ENCODE measurements at regions of chr15 and their contacts with region 1.

Region 1: GRCh38 chr15:31265871-31266711 is 60.5 kb upstream of the KLF13 start:
- DNase-seq: peak; percentile 81
- H3K4me3 Mint-ChIP-seq: no peak overlapping the region
- H3K27ac Mint-ChIP-seq: peak overlapping the region; percentile 67
- H3K4me1 Mint-ChIP-seq: peaks cover 84% of the 10 kb centered on the region
- H3K27me3 Mint-ChIP-seq: no peaks in the 10 kb centered on the region

Region 2: DNA sequence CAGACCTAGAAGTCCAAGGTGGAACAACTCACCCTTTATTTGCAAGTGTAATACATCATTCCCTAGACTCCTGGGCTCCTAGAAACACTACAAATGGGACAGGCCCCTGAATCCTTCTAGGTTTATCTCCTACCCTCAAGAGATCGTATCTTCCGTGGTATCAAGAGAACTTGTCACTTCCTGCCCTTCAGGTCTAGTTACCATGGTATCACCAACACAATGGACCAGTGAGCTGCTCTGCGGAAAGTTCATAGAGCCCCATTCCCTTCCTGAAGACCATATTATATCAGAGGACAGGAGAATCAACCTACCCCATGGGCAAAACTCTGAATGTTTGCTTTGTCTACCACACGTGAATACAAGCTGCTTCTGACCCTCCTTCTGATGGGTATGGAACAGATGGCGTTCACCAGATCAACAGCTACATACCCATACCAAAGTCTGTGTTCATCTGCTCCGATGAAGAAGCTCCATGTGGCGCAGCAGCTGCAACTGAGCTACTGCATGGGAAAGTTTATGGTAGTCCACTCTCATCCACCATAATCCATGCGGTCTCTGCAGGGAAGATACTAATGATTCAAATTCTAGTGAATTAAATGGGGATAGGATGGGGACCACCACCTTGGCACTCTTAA is 24.1 kb before region 1 on chr15:
- CTCF ChIA-PET with region 1: no interaction called
- intact Hi-C with region 1: loop called (anchors 2 kb)
- DNase-seq: no peak
- H3K4me3 Mint-ChIP-seq: no peak overlapping the region
- H3K27ac Mint-ChIP-seq: no peak overlapping the region
- H3K4me1 Mint-ChIP-seq: peaks cover 28% of the 10 kb centered on the region
- H3K27me3 Mint-ChIP-seq: no peaks in the 10 kb centered on the region

Region 3: DNA sequence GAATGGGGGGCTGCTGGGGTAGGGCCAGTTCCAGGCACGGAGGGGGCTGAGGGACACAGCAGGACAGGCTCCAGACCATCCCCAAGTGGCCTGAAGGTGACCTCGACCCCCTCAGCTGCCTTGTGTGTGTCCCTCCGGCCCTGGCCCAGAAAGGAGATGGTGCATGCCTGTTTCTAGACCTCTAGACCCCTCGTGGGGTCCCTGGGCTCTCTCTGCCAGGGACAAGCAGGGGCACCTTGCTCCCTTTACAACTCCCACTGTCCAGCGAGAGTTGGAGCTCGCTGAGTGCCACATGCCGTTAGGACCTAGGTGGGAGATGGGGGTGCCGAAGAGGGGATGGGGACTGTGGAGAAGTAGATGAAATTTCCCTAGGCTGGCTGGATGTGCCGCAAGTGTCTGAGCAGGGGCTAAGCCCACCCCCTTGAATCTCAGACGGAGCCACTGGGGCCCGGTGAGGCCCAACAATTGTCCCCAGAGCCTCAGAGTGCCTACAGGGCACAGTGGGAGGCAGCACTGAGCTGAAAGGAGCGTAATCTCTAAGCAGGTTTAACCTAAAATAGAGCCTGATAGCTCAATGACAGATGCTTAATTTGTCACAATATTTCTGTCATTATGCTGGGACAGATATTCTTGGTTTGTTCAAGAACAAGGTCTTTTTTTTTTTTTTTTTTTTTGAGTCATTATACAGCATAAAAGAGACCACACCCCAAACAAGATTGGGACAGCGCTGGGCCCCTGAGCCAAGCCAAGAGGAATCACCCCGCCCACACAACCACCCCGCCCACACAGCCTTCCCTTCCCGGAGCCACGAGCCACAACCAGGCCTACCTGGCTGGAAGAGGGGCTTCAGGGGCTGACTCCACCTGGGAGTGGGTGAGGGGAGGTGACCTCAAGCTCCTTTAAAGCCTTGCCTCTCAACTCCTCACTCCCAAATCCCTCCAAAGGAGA is 37.0 kb after region 1 on chr15:
- CTCF ChIA-PET with region 1: interaction called, 3 read pairs
- intact Hi-C with region 1: loop called (anchors 2 kb)
- DNase-seq: peak; percentile 46
- H3K4me3 Mint-ChIP-seq: no peak overlapping the region
- H3K27ac Mint-ChIP-seq: no peak overlapping the region
- H3K4me1 Mint-ChIP-seq: peaks cover 27% of the 10 kb centered on the region
- H3K27me3 Mint-ChIP-seq: no peaks in the 10 kb centered on the region

Region 4: DNA sequence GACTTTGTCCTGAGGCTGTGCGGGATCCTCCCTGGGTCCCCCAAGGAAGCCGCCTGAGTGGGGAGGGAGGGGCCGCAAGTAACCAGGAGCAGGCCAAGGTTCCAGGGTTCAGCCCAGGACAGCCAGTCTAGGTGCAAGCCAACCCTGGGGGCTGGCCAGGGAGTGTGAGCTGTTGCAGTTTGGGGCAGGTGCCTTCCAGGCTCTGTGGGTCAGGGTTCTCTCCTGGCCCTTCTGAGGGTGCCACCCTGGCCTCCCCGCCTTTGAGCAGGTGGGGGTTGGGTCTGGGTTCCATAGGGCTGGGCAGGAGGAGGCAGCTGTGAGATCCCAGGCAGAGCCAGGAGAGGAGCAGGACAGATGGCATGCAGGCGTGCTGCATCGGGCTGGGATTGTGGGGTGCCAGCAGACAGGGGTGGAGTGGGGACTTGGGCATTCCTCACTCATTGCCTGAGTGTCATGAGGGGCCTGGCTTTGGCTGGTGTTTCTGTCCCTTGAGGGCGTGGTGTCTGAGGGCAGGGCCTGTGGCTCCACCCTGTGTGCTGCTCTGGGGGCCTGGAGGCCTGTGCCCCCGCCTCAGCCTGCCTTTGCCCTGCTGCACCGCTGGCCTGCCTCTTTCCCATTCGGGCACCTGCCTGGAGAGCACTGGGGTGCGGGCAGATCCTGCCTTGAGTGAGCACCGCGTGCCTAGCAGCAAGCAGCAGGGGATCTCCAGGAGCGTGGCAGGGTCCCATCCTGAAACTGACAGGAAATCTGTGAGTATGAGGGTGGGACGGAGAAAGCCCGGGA is 78.9 kb after region 1 on chr15:
- CTCF ChIA-PET with region 1: interaction called, 3 read pairs
- intact Hi-C with region 1: loop called (anchors 1 kb)
- DNase-seq: peak; percentile 66
- H3K4me3 Mint-ChIP-seq: peak overlapping the region; percentile 92
- H3K27ac Mint-ChIP-seq: peak overlapping the region; percentile 99
- H3K4me1 Mint-ChIP-seq: peaks cover 98% of the 10 kb centered on the region
- H3K27me3 Mint-ChIP-seq: no peaks in the 10 kb centered on the region